Vagina (tissue), 2 donors: ENCODE measurements at regions of chr2 and their contacts with region 1.

Region 1: GRCh38 chr2:28406276-28407096 is 13.8 kb downstream of the FOSL2 start:
- DNase-seq: no peak
- H3K4me3 ChIP-seq: no peak overlapping the region
- H3K27ac ChIP-seq: peak overlapping the region; percentile 70
- H3K4me1 ChIP-seq: peaks cover 97% of the 10 kb centered on the region
- H3K27me3 ChIP-seq: no peaks in the 10 kb centered on the region
- CTCF ChIP-seq: no peak
- POLR2A ChIP-seq: no peak

Region 2: GRCh38 chr2:28366496-28367282 is 39.8 kb before region 1 on chr2:
- intact Hi-C with region 1: no loop called
- DNase-seq: no peak
- H3K4me3 ChIP-seq: no peak overlapping the region
- H3K27ac ChIP-seq: no peak overlapping the region
- H3K4me1 ChIP-seq: peaks cover 5% of the 10 kb centered on the region
- H3K27me3 ChIP-seq: no peaks in the 10 kb centered on the region
- CTCF ChIP-seq: no peak
- POLR2A ChIP-seq: no peak

Region 3: DNA sequence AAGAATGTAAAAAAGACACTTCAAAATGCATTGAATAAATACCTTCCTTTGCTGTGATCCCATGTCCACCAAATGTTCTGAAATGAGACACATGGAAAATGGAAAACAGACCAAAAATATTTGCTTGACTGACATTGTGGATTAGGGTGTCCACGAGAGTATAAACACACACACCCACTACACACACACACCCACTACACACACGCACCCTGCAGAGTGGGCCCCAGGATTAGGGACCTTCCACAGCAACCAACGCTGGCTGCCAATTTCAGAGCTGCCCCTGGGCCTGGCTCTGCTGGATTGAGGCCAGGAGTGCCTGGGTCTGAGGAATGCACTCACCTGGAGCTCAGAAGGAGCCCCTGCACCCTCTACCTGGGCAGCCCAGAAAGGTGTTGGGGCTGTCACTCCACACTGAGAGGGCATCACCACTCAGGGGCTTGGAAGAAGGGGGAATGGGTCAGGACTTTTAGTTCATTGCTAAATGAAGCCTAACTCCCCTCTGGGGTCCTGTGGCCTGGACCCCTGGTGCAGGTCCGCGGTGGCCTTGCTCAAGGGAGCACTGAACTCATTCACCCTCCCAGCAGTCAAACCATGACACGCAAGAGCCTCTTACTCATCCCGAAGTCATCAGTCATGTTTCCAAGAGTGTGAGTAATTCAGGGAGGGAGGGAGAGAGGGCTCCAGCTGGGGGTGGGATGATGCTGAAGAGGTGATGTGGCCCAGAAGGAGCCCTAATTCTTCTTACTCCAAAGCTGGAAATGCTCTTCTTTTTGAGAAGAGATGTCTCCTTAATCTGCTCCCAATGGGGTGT is 39.2 kb after region 1 on chr2:
- intact Hi-C with region 1: loop called (anchors 5 kb)
- DNase-seq: no peak
- H3K4me3 ChIP-seq: no peak overlapping the region
- H3K27ac ChIP-seq: no peak overlapping the region
- H3K4me1 ChIP-seq: peaks cover 51% of the 10 kb centered on the region
- H3K27me3 ChIP-seq: no peaks in the 10 kb centered on the region
- CTCF ChIP-seq: no peak
- POLR2A ChIP-seq: no peak